ENCODE measurements at regions of chr12 and their contacts with region 1.

Region 1: GRCh38 chr12:5073853-5074252 is 30.2 kb downstream of the KCNA5 start:
- DNase-seq: no peak
- H3K4me3 ChIP-seq: no peak overlapping the region
- CTCF ChIP-seq: peak; percentile 24

Region 2: DNA sequence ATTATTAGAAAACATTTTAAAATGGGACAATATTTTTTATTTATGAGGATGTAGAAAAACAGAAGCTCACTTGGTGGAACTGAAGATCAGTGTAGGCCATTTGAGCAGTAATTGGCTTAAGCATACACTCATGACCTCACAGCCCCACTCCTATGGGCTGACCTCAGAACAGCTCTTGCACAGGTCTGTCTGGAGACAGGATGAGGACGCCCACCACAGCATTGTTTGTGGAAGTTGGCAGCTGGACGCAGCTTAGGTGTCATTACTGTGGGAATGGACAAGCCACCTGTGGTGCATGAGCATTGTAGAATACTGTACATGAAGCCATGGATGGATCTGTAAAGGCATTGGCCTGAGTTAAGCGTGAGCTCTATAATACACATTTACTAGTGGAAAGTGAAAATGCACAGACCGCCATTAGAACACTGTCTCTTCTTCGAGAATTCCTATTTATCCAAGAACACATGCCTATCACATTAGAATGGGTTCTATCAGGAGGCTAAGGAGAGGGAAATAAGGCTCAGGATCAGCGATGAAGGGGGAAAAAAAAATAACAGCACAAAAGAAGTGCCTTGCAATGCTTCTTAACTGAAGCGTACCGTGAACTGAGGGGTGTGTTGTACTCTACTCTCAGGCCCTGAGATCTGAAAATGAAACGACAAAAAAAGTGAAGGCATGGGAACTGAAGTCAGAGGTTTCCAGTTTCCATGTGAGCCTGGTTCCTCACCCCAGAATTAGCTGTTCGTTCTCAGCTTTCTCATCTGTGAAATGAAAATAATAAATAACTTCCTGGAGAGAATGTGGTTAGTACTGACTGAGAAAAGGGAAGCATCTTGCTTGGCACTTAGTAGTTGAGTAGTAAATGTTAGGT is 130.6 kb before region 1 on chr12:
- CTCF ChIA-PET with region 1: no interaction called
- POLR2A ChIA-PET with region 1: no interaction called
- DNase-seq: no peak
- H3K4me3 ChIP-seq: no peak overlapping the region
- CTCF ChIP-seq: no peak

Region 3: DNA sequence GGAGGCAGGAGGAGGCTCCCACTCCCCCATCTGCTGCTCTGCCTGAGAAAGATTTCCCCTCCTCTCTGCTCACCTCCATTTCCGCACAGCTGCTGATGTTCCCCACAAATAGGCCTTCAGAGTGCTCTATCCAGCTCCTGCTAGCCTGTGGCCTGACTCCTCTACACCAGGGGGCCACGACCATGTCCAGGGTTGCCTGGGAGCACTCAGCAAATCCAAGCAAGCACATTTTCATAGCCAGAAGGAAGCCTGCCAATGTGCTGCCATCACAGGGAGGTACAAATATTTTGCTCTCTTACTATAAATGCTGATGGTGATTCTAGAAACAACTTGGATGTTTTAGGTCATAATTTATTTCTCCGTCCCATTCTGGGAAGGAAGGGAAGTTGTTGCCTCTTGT is 12.9 kb before region 1 on chr12:
- CTCF ChIA-PET with region 1: interaction called, 21 read pairs
- POLR2A ChIA-PET with region 1: no interaction called
- DNase-seq: no peak
- H3K4me3 ChIP-seq: no peak overlapping the region
- CTCF ChIP-seq: no peak

Region 4: DNA sequence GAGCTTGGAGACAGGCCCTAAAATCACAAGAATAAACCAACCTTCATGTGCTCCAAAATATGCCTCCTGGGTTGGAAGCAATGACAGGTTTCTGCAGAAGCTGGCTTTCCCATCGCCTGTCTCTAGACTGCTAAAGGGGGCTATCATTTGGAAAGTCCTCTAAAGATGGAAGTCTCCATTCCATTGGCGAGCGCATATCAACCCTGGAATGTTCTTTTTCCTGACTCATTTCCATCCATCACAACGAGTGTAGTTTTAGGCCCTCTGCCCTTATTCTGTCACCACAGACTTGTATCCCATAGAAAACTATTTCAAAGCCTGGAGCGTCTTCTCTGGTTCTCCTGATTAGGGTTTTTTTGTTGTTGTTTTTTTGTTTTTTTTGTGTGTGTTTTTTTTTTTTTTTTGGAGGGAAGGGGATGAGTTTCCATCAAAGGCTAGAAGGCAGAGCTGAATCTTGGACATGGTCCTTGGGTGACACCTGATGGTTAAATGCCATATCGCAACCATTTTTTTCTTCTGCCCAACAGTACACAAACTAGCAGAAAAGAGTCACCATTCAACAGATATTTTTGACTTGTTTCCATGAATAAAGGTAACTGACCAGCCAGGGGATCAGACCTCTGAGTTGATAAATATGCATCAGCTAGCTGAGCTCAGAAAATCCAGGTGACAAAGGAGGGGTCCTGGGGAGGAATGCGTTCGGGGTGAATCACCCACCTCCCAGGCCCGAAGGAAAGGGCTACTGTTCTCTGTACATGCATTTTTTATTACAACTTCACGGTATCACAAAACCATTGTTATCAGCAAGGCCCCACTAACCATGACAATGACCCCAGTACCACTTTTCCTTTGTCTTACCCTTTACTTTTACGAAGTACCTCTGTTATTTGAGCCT is 10.3 kb after region 1 on chr12:
- CTCF ChIA-PET with region 1: interaction called, 113 read pairs
- POLR2A ChIA-PET with region 1: no interaction called
- DNase-seq: no peak
- H3K4me3 ChIP-seq: no peak overlapping the region
- CTCF ChIP-seq: peak; percentile 57

Region 5: GRCh38 chr12:5102261-5102789 is 28.5 kb after region 1 on chr12:
- CTCF ChIA-PET with region 1: no interaction called
- POLR2A ChIA-PET with region 1: no interaction called
- DNase-seq: peak; percentile 78
- H3K4me3 ChIP-seq: no peak overlapping the region
- CTCF ChIP-seq: no peak